K562 (cell line): ENCODE measurements at regions of chr7 and their contacts with region 1.

Region 1: DNA sequence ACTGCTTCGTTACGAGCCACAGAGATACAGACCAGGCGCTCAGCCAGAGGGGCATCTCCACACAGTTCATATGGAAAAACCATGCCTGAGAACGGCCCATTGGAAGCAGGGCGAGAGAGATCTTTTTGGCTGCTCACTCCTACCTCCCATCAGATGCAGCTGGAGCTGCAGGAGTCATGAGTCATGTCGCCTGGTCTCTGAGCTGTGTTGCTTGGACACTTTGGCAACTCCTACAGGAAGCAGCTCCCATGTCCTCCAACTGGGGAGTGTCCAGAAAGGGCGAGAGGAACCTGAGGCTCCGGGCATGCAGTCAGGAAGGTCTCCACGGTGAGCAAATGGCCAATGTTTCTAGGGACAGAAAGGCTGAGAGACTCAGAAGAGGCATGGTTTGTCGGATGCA is 24.9 kb downstream of the INSIG1 start:
- DNase-seq: no peak
- ATAC-seq: no peak
- H3K4me3 ChIP-seq: no peak overlapping the region
- H3K27ac ChIP-seq: no peak overlapping the region
- H3K4me1 ChIP-seq: peaks cover 4 to 16% of the 10 kb centered on the region in 2 experiments
- H3K27me3 ChIP-seq: peaks cover 0 to 21% of the 10 kb centered on the region in 2 experiments; a peak in 3 of 5 replicates
- CTCF ChIP-seq: no peak
- EP300 ChIP-seq: no peak
- POLR2A ChIP-seq: no peak
- RAD21 ChIP-seq: no peak

Region 2: DNA sequence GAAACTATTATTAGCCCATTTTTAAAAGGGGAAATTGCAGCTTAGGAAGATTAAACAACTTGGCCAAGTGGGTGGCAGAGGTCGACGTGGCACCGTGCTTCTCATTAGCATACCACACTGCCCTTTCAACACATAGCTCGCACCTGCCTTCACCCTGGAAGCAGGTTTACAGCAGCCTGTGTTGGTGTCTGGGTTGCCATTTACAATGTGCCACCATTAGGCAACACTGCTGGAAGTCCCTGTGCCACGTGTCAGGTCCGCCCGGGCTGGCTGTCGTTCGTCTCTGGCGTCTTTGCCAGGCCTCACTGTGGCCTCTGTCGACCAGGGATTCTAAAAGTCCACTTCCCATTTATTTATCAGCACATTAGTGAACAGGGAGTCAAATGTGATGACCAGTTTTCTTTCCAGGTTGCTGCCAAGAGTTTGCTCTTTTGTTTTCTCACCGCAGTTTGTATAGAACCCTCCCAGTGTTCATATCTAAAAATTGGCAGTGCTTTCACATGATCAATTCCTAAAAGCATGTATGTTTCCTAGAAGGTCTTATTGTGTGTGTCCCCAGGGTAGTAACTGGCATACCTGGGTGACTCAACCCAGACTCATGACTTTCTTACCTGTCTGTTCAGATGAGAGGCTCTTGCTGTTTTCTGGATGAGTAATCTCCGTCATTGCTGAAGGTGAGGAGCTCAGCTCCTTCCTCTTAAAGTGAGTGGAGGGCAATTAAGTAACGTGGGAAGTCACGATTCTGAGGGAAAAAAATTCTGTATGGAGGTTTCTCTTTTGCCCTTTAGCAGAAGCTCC is 15.7 kb before region 1 on chr7:
- CTCF ChIA-PET with region 1: no interaction called
- POLR2A ChIA-PET with region 1: interaction called, 11 read pairs
- in situ Hi-C with region 1: no loop called
- intact Hi-C with region 1: no loop called
- DNase-seq: no peak
- ATAC-seq: no peak
- H3K4me3 ChIP-seq: no peak overlapping the region
- H3K27ac ChIP-seq: no peak overlapping the region
- H3K4me1 ChIP-seq: peaks cover 6 to 10% of the 10 kb centered on the region in 2 experiments; a peak in 4 of 5 replicates
- H3K27me3 ChIP-seq: no peaks in the 10 kb centered on the region
- CTCF ChIP-seq: no peak
- EP300 ChIP-seq: no peak
- POLR2A ChIP-seq: no peak; the same call in 1 of the 2 replicates
- RAD21 ChIP-seq: no peak

Region 3: DNA sequence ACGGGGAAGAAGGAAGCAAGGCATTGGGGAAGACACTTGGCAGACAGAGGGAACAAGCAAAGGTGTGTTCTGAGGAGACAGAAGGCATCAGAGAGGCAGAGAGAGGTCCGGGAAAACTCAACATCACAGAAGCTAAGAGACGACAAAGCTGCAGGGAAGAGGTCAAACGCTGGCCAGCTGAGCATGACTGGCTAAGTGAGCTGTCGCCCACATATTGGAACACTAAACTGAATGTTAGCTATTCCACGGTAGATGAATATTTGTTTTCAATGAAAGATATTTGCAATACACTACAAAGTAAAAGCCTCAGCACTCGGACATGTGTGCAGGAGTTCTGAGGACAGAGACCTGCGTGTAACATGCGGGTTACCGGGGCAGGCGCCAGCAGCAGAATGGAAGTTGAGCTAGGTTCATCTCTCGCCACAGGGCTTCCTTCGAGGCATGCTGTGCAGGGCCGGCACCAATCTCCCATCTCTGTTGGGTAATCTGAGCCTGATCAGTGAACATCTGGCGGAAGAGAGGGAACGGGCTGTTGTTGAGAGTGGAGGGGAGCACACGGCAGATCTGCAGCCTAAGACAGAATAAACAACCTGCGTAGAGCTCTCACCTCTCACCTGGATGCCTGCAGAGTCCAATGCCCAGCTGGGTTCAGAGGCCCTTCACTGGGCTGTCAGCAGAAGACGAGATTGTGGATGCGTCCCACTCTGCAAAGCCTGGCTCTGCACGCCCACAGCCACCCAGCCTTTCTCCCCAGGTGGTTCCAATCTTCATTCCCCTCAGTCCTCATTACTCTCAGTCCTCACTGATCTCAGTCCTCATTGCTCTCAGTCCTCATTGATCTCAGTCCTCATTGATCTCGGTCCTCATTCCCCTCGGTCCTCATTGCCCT is 11.1 kb after region 1 on chr7:
- CTCF ChIA-PET with region 1: interaction called, 3 read pairs
- POLR2A ChIA-PET with region 1: interaction called, 12 read pairs
- in situ Hi-C with region 1: no loop called
- intact Hi-C with region 1: no loop called
- DNase-seq: no peak
- ATAC-seq: peak; percentile 63
- H3K4me3 ChIP-seq: no peak overlapping the region
- H3K27ac ChIP-seq: no peak overlapping the region
- H3K4me1 ChIP-seq: peaks cover 0 to 8% of the 10 kb centered on the region in 2 experiments; a peak in 1 of 5 replicates
- H3K27me3 ChIP-seq: peaks cover 72 to 78% of the 10 kb centered on the region in 2 experiments
- CTCF ChIP-seq: no peak
- EP300 ChIP-seq: no peak
- POLR2A ChIP-seq: no peak
- RAD21 ChIP-seq: no peak

Region 4: GRCh38 chr7:155763691-155764437 is 441.3 kb after region 1 on chr7:
- CTCF ChIA-PET with region 1: no interaction called
- POLR2A ChIA-PET with region 1: no interaction called
- in situ Hi-C with region 1: no loop called
- intact Hi-C with region 1: no loop called
- DNase-seq: no peak
- ATAC-seq: no peak
- H3K4me3 ChIP-seq: no peak overlapping the region
- H3K27ac ChIP-seq: no peak overlapping the region
- H3K4me1 ChIP-seq: no peaks in the 10 kb centered on the region
- H3K27me3 ChIP-seq: no peaks in the 10 kb centered on the region
- CTCF ChIP-seq: no peak
- EP300 ChIP-seq: no peak
- POLR2A ChIP-seq: no peak
- RAD21 ChIP-seq: no peak